Lower leg skin (tissue), 4 donors: ENCODE measurements at regions of chr7 and their contacts with region 1.

Region 1: GRCh38 chr7:19747740-19748339 is 25.6 kb downstream of the TMEM196 start:
- DNase-seq: no peak
- H3K4me3 ChIP-seq: no peak overlapping the region
- CTCF ChIP-seq: no peak
- POLR2A ChIP-seq: no peak

Region 2: GRCh38 chr7:20310963-20311742 is 563.3 kb after region 1 on chr7:
- intact Hi-C with region 1: loop called (anchors 10 kb)
- DNase-seq: no peak
- H3K4me3 ChIP-seq: no peak overlapping the region
- CTCF ChIP-seq: no peak
- POLR2A ChIP-seq: no peak